B cell (primary cell): ENCODE measurements at regions of chr3 and their contacts with region 1.

Region 1: GRCh38 chr3:52407779-52408178 is 37.1 kb downstream of the SEMA3G start:
- DNase-seq: no peak
- ATAC-seq: no peak
- H3K4me3 ChIP-seq: no peak overlapping the region
- H3K4me3 Mint-ChIP-seq: peak overlapping the region; percentile 86
- H3K27ac ChIP-seq: no peak overlapping the region
- H3K27ac Mint-ChIP-seq: no peak overlapping the region
- H3K4me1 ChIP-seq: peaks cover 26 to 39% of the 10 kb centered on the region in 2 donors
- H3K4me1 Mint-ChIP-seq: peaks cover 34% of the 10 kb centered on the region
- H3K27me3 ChIP-seq: no peaks in the 10 kb centered on the region
- H3K27me3 Mint-ChIP-seq: no peaks in the 10 kb centered on the region
- CTCF ChIP-seq: no peak

Region 2: DNA sequence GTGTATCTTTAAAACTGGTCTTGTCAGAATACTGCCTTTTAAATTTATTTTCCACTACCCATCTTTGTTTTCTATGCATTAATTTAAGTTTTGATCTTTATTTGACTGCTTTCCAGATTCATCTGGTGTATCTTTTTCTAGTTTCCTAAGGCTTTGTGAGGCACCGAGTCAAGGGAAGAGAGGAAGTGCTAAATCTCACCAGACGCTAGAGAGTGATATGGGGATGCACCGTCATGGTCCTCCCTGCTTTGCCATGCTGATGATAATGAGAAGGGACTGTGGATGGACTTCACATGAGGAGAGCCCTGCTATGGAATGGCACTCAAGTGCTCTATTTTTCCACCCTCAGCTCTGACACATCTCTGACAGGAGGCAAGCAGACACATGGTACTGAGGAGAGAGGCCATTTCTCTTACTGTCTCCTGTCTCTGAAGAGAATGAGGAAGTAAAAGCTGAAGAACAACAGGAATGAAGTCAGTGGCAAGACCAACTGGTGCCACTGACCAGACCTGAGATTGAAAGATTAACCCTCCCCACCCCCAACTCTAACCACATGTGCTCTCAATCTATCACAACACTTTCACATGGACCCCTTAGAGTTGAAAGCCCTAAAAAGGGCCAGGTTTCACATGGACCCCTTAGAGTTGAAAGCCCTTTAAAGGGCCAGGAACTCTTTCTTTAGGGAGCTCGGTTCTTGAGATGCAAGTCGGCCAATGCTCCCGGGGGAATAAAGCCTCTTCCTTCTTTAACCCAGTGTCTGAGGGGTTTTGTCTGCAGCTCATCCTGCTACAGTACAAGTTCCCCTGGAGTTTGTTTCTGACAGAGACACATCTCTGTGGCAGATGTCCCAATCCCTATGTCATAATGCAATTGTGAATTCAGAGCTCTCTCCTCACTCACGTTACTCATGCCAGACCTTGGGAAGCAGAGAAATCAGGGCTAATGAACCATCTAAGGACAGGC is 546.8 kb before region 1 on chr3 and contains the start of gene IQCF2:
- CTCF ChIA-PET with region 1: no interaction called
- POLR2A ChIA-PET with region 1: no interaction called
- intact Hi-C with region 1: no loop called
- DNase-seq: peak; percentile 27
- ATAC-seq: no peak
- H3K4me3 ChIP-seq: no peak within 1 kb of the TSS
- H3K4me3 Mint-ChIP-seq: peak within 1 kb of the TSS; percentile 8
- H3K27ac ChIP-seq: no peak within 1 kb of the TSS
- H3K27ac Mint-ChIP-seq: no peak within 1 kb of the TSS
- H3K4me1 ChIP-seq: peaks cover 0 to 9% of the 10 kb centered on the region in 2 donors
- H3K4me1 Mint-ChIP-seq: peaks cover 4% of the 10 kb centered on the region
- H3K27me3 ChIP-seq: peaks cover 0 to 4% (median 0%) of the 10 kb centered on the region in 4 experiments
- H3K27me3 Mint-ChIP-seq: peaks cover 16% of the 10 kb centered on the region
- CTCF ChIP-seq: no peak
- total RNA-seq, gene IQCF2: not detected in 2 replicates

Region 3: GRCh38 chr3:52428151-52429005 is 20.6 kb after region 1 on chr3:
- CTCF ChIA-PET with region 1: interaction called, 21 read pairs
- POLR2A ChIA-PET with region 1: interaction called, 6 read pairs
- intact Hi-C with region 1: no loop called
- DNase-seq: peak; percentile 55
- ATAC-seq: peak; percentile 56
- H3K4me3 ChIP-seq: no peak overlapping the region
- H3K4me3 Mint-ChIP-seq: no peak overlapping the region
- H3K27ac ChIP-seq: no peak overlapping the region
- H3K27ac Mint-ChIP-seq: no peak overlapping the region
- H3K4me1 ChIP-seq: no peaks in the 10 kb centered on the region
- H3K4me1 Mint-ChIP-seq: no peaks in the 10 kb centered on the region
- H3K27me3 ChIP-seq: peaks cover 0 to 7% (median 0%) of the 10 kb centered on the region in 4 experiments
- H3K27me3 Mint-ChIP-seq: no peaks in the 10 kb centered on the region
- CTCF ChIP-seq: peak; percentile 69